ENCODE measurements at regions of chr9 and their contacts with region 1.

Region 1: DNA sequence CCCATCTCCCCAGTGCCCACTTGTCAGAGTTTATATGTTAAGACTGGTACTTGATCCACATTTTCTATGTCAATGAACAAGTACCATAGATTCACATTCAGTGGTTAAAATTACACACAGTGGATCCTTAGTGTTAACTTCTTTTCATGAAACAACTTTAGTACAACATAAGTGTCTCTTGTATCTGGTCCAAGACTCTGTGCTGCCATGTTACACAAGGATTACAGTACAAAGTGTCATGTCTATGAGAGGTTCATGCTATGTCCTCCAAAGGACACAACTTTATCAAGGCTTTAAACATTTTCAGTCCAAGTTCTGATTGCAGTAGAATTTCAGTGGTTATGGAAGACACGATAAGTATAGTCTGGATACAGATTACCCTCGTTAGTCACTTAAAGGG is 13.3 kb upstream of the VLDLR start:
- DNase-seq: no peak
- ATAC-seq: peak; percentile 27

Region 2: DNA sequence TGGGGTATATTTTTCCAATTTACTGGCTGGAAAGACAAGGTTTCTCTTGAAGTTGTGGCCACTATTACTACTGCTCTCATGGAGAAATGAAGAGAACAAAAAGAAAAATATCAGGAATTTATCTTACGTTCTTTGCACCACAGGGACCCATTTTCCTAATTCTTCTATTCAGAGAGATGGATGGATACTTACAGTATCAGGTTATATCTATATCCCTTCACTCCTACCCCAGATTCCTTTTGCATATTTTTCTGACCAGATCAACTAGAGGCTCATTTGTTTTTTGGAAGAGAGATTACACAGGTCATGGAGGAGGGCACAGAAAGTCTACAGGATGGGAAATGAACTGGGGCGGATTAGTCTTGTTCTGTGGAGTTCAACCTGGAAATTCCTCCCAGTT is 263.8 kb before region 1 on chr9:
- intact Hi-C with region 1: loop called (anchors 1 kb)
- DNase-seq: no peak
- ATAC-seq: no peak

Region 3: GRCh38 chr9:3585606-3586005 is 977.3 kb after region 1 on chr9:
- intact Hi-C with region 1: no loop called
- DNase-seq: no peak
- ATAC-seq: no peak